ENCODE measurements at regions of chr18 and their contacts with region 1.

Region 1: GRCh38 chr18:66560092-66560491 is 43.8 kb downstream of the CDH19 start:
- DNase-seq: peak; percentile 52
- H3K4me3 ChIP-seq: no peak overlapping the region
- H3K27ac ChIP-seq: no peak overlapping the region
- H3K4me1 ChIP-seq: peaks cover 2% of the 10 kb centered on the region
- H3K27me3 ChIP-seq: no peaks in the 10 kb centered on the region
- CTCF ChIP-seq: peak; percentile 23 to 33
- POLR2A ChIP-seq: no peak

Region 2: DNA sequence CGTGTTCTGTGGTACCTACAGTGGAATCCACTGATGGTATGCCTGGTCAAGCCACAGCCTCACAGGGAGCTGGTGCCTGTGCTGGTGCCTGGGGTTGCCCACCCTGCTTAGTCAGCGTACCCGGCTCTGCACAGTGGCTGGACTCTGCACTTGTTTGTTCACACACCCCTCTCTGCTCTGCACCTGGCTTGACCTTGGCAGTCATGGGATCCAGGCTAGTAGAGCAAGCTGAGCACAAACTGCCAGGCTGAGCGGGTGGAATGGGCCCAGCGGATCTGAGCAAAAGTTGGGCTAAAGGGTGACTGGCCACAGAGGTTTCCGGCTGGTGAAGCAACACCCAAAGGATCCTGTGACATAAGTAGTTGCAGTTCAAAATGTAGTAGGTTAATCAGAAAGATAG is 119.7 kb before region 1 on chr18:
- CTCF ChIA-PET with region 1: no interaction called
- POLR2A ChIA-PET with region 1: no interaction called
- dilution Hi-C with region 1: no loop called
- intact Hi-C with region 1: no loop called
- DNase-seq: no peak
- H3K4me3 ChIP-seq: no peak overlapping the region
- H3K27ac ChIP-seq: no peak overlapping the region
- H3K4me1 ChIP-seq: no peaks in the 10 kb centered on the region
- H3K27me3 ChIP-seq: no peaks in the 10 kb centered on the region
- CTCF ChIP-seq: no peak
- POLR2A ChIP-seq: no peak

Region 3: GRCh38 chr18:66599190-66599589 is 39.1 kb after region 1 on chr18:
- CTCF ChIA-PET with region 1: interaction called, 4 read pairs
- POLR2A ChIA-PET with region 1: no interaction called
- dilution Hi-C with region 1: no loop called
- intact Hi-C with region 1: loop called (anchors 5 kb)
- DNase-seq: peak; percentile 78
- H3K4me3 ChIP-seq: no peak overlapping the region
- H3K27ac ChIP-seq: no peak overlapping the region
- H3K4me1 ChIP-seq: peaks cover 3% of the 10 kb centered on the region
- H3K27me3 ChIP-seq: no peaks in the 10 kb centered on the region
- CTCF ChIP-seq: no peak
- POLR2A ChIP-seq: no peak

Region 4: GRCh38 chr18:66682855-66683322 is 122.8 kb after region 1 on chr18:
- CTCF ChIA-PET with region 1: no interaction called
- POLR2A ChIA-PET with region 1: no interaction called
- dilution Hi-C with region 1: no loop called
- intact Hi-C with region 1: loop called (anchors 10 kb)
- DNase-seq: peak; percentile 88
- H3K4me3 ChIP-seq: peak overlapping the region in 2 of 3 experiments; percentile 19 to 55
- H3K27ac ChIP-seq: peak overlapping the region; percentile 35
- H3K4me1 ChIP-seq: peaks cover 7% of the 10 kb centered on the region
- H3K27me3 ChIP-seq: no peaks in the 10 kb centered on the region
- CTCF ChIP-seq: no peak
- POLR2A ChIP-seq: no peak

Region 5: DNA sequence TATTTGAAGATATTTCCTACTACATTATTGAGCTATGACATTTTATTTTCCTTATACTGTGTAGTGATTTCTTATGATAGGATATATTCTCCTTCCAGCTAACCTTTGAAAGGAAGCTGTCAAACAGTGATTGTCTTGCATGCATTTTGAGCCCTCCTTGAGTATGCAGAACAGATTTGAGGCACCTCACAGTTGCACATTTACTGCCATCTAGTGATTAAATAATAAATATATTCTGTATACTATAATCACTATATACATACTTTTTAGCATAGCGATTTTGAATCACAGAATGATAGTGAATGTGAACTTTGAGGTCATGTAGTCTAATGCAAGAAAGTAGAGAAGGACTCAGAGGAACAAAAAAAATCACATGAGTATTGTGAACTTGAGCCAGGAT is 312.2 kb after region 1 on chr18:
- CTCF ChIA-PET with region 1: interaction called, 61 read pairs
- POLR2A ChIA-PET with region 1: no interaction called
- dilution Hi-C with region 1: no loop called
- intact Hi-C with region 1: loop called (anchors 1 kb)
- DNase-seq: peak; percentile 51
- H3K4me3 ChIP-seq: no peak overlapping the region
- H3K27ac ChIP-seq: no peak overlapping the region
- H3K4me1 ChIP-seq: no peaks in the 10 kb centered on the region
- H3K27me3 ChIP-seq: no peaks in the 10 kb centered on the region
- CTCF ChIP-seq: peak in 1 of 2 donors; percentile 15
- POLR2A ChIP-seq: no peak